Cardiac septum (tissue), 1 donor: ENCODE measurements at regions of chr3 and their contacts with region 1.

Region 1: GRCh38 chr3:14791343-14791945 is 27.3 kb upstream of the FGD5 start:
- DNase-seq: peak; percentile 83

Region 2: GRCh38 chr3:14863333-14864100 is 72.1 kb after region 1 on chr3:
- intact Hi-C with region 1: loop called (anchors 5 kb)
- DNase-seq: no peak